A673 (cell line): ENCODE measurements at regions of chr3 and their contacts with region 1.

Region 1: GRCh38 chr3:127003601-127004280 is 20.8 kb downstream of the PLXNA1 start:
- DNase-seq: no peak
- H3K4me3 ChIP-seq: no peak overlapping the region
- H3K27ac ChIP-seq: no peak overlapping the region
- H3K4me1 ChIP-seq: peaks cover 21% of the 10 kb centered on the region
- H3K27me3 ChIP-seq: no peaks in the 10 kb centered on the region
- CTCF ChIP-seq: no peak

Region 2: DNA sequence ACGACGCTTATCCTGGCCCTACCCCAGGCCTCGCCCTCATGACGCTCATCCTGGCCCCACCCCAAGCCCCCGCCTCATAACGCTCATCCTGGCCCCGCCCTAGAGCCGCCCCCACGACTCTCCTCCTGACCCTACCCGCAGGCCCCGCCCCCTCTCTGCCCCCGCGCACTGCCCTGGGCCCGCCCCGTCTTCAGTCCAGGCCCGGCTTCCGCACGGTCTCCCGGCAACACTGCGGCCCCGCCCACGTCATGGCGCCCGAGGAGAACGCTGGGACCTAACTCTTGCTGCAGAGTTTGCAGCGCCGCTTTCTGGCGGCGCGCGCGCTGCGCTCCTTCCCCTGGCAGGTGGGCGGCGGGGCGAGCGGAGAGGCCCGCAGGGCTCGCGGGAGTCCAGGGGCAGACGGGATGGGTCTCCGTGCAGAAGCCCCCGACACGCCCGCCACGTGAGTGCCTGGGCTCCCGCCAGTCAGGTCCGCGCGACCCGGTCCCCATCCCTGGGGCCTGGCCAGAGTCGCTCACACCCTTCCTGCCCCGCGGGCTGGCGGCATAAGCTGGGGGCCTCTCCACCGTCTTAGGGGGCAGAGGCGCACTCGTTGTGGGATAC is 1087.3 kb before region 1 on chr3:
- CTCF ChIA-PET with region 1: no interaction called
- POLR2A ChIA-PET with region 1: interaction called, 13 read pairs
- intact Hi-C with region 1: no loop called
- DNase-seq: peak; percentile 97
- H3K4me3 ChIP-seq: peak overlapping the region; percentile 65
- H3K27ac ChIP-seq: peak overlapping the region; percentile 67
- H3K4me1 ChIP-seq: peaks cover 4% of the 10 kb centered on the region
- H3K27me3 ChIP-seq: no peaks in the 10 kb centered on the region
- CTCF ChIP-seq: peak; percentile 58

Region 3: GRCh38 chr3:126419886-126420786 is 583.6 kb before region 1 on chr3:
- CTCF ChIA-PET with region 1: no interaction called
- POLR2A ChIA-PET with region 1: no interaction called
- intact Hi-C with region 1: no loop called
- DNase-seq: no peak
- H3K4me3 ChIP-seq: no peak overlapping the region
- H3K27ac ChIP-seq: no peak overlapping the region
- H3K4me1 ChIP-seq: no peaks in the 10 kb centered on the region
- H3K27me3 ChIP-seq: no peaks in the 10 kb centered on the region
- CTCF ChIP-seq: no peak